Common myeloid progenitor, CD34-positive (primary cell): ENCODE measurements at regions of chr9 and their contacts with region 1.

Region 1: GRCh38 chr9:93302551-93303257 is 118.8 kb downstream of the WNK2 start:
- DNase-seq: peak; percentile 85 to 93 (median 90)
- H3K4me3 ChIP-seq: no peak overlapping the region
- H3K27ac ChIP-seq: no peak overlapping the region
- H3K4me1 ChIP-seq: no peaks in the 10 kb centered on the region
- H3K27me3 ChIP-seq: peaks cover 0 to 9% (median 0%) of the 10 kb centered on the region in 5 experiments

Region 2: DNA sequence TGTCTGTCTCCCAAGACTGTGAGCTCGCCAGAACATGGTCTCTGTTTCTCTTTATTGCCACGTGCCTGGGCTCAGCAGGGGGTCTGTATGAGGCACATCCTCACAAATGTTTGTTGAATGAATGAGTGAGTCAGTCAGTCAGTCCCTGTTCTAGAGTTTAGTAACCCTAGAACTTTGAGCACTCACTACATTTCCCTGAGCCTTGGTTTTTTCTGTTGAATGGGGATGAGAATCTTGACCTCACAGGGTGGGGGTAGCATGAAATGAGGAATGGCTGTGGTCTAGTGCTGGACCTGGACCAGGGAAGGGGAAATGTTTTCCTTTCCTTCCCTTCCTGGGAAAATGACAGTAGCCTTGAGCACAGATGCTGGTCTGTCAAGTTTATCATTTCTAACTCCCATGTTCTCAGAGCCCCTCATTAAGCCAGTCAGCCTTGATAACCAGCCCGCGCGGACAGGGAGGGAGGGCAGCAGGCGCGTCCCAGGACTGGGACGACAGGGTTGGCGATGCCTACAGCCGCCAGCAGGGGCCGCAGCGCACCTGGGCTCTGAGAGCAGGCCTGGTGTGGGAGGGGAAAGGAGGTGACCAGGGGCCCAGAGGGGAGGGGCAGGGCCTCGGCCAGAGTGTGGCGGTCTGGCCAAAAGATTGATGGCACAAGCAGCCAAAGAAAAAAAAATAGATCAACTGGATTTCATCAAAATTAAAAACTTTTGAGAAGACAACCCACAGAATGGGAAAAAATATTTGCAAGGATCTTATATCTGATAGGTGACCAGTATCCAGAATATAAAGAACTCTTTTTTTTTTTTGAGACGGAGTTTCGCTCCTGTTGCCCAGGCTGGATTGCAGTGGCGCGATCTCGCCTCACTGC is 142.9 kb before region 1 on chr9:
- CTCF ChIA-PET with region 1: interaction called, 50 read pairs
- POLR2A ChIA-PET with region 1: no interaction called
- DNase-seq: peak; percentile 54 to 61 (median 59)
- H3K4me3 ChIP-seq: no peak overlapping the region
- H3K27ac ChIP-seq: no peak overlapping the region
- H3K4me1 ChIP-seq: peaks cover 0 to 4% (median 2%) of the 10 kb centered on the region in 4 experiments
- H3K27me3 ChIP-seq: peaks cover 0 to 5% (median 0%) of the 10 kb centered on the region in 5 experiments

Region 3: DNA sequence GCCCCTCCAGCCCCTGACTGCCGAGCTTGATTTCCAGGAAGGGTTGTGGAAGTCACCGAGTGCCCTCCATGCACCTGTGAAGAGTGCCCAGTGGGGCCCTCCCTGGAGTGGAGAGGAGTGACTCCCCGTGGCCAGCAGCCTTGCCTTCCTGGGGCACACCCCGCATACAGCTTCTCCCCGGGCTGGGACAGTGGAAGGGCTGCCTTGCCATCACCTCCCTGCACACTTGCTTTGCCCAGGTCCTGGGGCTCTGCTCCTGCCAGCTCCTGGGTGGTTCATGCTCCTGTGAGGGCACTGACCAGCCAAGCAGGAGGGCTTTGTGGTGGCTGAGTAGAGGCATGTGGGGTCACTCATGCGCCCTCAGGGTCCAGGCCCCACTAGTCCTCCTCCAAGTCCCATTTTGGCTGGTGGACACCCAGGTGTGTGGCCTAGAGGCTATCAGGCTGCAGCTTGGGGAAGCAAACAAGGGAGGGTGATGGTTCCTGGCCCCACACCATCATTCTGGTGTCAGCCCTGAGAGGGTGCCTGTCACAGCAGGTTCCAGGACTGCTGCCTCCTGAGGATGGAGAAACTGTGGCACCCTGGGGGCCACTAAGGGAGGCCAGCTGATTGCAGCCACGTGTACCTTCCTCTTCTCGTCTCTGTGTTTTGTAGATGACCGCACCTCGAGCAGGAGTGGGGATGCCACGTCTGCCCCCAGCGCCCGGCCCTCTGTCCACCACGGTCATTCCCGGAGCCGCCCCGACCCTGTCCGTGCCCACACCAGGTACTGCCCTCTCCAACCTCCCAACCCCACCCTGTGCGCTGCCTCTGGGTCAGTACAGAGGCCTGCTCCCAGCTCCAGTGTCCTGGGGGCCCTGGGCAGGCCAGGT is 14.4 kb after region 1 on chr9:
- CTCF ChIA-PET with region 1: interaction called, 42 read pairs
- POLR2A ChIA-PET with region 1: interaction called, 6 read pairs
- DNase-seq: no peak
- H3K4me3 ChIP-seq: peak overlapping the region in 2 of 7 experiments; percentile 24 to 52
- H3K27ac ChIP-seq: no peak overlapping the region
- H3K4me1 ChIP-seq: peaks cover 0 to 26% (median 8%) of the 10 kb centered on the region in 4 experiments
- H3K27me3 ChIP-seq: peaks cover 0 to 50% (median 17%) of the 10 kb centered on the region in 5 experiments

Region 4: GRCh38 chr9:93501406-93501805 is 198.7 kb after region 1 on chr9:
- CTCF ChIA-PET with region 1: no interaction called
- POLR2A ChIA-PET with region 1: no interaction called
- DNase-seq: peak in 2 of 3 donors; percentile 46 to 57
- H3K4me3 ChIP-seq: peak overlapping the region; percentile 12 to 82 (median 59)
- H3K27ac ChIP-seq: peak overlapping the region; percentile 30 to 72
- H3K4me1 ChIP-seq: peaks cover 10 to 39% (median 20%) of the 10 kb centered on the region in 4 experiments
- H3K27me3 ChIP-seq: no peaks in the 10 kb centered on the region